Posterior cingulate gyrus (tissue), 11 donors: ENCODE measurements at regions of chr18 and their contacts with region 1.

Region 1: GRCh38 chr18:49728542-49728941 is 84.8 kb downstream of the ACAA2 start:
- DNase-seq: peak in 6 of 10 donors; percentile 14 to 85 (median 36)

Region 2: DNA sequence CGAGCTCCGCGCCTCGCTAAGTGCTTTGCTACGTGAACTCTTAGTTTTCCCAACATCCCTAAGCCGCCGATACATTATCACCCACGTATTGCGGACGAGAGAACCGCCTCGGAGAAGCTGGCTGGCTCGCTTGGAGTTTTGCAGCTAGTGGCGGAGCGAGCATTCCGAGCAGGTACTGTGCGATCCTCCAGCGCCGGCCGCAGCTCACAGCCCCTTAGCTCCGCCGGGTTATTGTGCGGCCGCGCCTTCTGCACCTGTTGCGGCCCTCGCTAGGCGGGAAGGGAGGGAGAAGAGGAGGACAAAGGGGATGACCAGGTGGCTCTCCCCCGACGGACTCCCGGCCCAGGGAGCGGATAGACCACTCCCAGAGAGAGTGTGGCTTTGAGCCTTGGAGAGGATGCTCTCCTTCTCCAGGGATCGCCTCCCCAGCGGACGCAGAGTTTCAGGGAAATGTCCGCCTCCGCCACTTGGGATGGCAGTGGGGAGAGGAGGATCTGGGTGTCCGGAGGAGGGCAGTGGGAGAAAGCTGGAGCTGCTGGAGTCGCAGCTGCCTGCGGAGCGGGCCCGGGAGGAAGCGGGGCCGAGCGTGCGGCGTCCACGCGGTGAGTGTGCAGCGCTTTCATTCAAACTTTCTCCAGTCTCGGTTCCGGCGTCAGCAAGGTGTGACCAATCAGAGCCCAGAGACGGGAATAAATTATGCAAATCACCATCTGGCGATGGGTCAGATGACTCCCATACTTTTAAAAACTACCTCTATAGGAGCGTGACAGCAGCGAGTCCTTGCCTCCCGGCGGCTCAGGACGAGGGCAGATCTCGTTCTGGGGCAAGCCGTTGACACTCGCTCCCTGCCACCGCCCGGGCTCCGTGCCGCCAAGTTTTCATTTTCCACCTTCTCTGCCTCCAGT is 167.0 kb before region 1 on chr18 and contains the start of gene LIPG:
- intact Hi-C with region 1: loop called (anchors 10 kb)
- DNase-seq: peak in 6 of 10 donors; percentile 10 to 83 (median 53)